Activated T-helper 1 cell treated with anti-CD3 and anti-CD28 coated beads, Interleukin-12 subunit alpha, Interleukin-12 subunit beta, Interleukin-2, Interleukin-4 antibody, amounts not matched to agents 30 ng/mL and 10 ng/mL and 1 ng/mL, durations not matched to agents 14 hours and 24 hours and 36 hours (primary cell): ENCODE measurements at regions of chr9 and their contacts with region 1.

Region 1: GRCh38 chr9:109887079-109887478 is 107.1 kb downstream of the PALM2AKAP2 start:
- DNase-seq: no peak
- H3K4me3 Mint-ChIP-seq: peak overlapping the region; percentile 64
- H3K27ac Mint-ChIP-seq: peak overlapping the region; percentile 92
- H3K4me1 Mint-ChIP-seq: peaks cover 94% of the 10 kb centered on the region
- H3K27me3 Mint-ChIP-seq: no peaks in the 10 kb centered on the region

Region 2: DNA sequence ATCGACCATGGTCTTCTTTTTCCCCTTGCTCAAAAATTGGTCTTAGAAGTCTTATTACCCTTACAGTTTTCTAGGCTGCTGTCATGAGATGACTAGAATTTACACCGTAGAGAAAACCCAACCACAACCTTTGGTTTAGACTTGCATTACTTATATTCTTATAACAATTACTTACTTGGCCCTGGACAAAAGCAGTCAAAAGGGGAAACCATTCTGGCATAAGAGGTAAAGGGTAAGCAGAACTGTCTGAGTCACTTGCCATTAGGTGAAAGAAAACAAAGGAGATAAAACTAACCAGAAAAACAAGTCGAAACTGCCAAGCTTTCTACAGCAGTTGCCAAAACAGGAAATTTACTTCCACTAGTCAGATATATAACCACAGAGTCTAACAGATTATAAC is 785.3 kb before region 1 on chr9:
- intact Hi-C with region 1: loop called (anchors 1 kb)
- DNase-seq: peak; percentile 14
- H3K4me3 Mint-ChIP-seq: peak overlapping the region; percentile 46
- H3K27ac Mint-ChIP-seq: peak overlapping the region; percentile 73
- H3K4me1 Mint-ChIP-seq: peaks cover 65% of the 10 kb centered on the region
- H3K27me3 Mint-ChIP-seq: no peaks in the 10 kb centered on the region

Region 3: GRCh38 chr9:109463924-109464625 is 423.0 kb before region 1 on chr9:
- intact Hi-C with region 1: loop called (anchors 2 kb)
- DNase-seq: peak; percentile 29
- H3K4me3 Mint-ChIP-seq: no peak overlapping the region
- H3K27ac Mint-ChIP-seq: peak overlapping the region; percentile 88
- H3K4me1 Mint-ChIP-seq: peaks cover 71% of the 10 kb centered on the region
- H3K27me3 Mint-ChIP-seq: peaks cover 1% of the 10 kb centered on the region

Region 4: DNA sequence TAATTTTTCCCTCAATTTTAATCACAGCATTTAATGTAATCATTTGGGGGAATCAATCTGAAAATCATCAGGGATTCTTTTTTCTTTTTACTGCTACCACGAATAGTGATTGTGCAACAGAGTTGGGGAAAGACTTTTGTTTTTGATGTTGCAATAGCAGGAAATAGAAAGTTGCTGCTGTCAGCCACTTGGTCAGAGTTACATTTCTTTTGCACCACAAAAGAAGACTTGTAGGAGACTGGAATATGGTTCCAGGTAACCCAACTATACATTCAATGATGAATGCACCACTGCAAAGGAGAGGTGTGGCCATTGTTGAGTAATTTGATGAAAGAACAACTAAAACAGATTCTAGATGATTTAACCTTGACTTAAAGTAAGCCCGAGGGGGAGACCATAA is 153.4 kb before region 1 on chr9:
- intact Hi-C with region 1: loop called (anchors 5 kb)
- DNase-seq: no peak
- H3K4me3 Mint-ChIP-seq: no peak overlapping the region
- H3K27ac Mint-ChIP-seq: no peak overlapping the region
- H3K4me1 Mint-ChIP-seq: peaks cover 17% of the 10 kb centered on the region
- H3K27me3 Mint-ChIP-seq: peaks cover 32% of the 10 kb centered on the region

Region 5: GRCh38 chr9:109831998-109832658 is 55.0 kb before region 1 on chr9:
- intact Hi-C with region 1: no loop called
- DNase-seq: no peak
- H3K4me3 Mint-ChIP-seq: no peak overlapping the region
- H3K27ac Mint-ChIP-seq: no peak overlapping the region
- H3K4me1 Mint-ChIP-seq: no peaks in the 10 kb centered on the region
- H3K27me3 Mint-ChIP-seq: peaks cover 1% of the 10 kb centered on the region

Region 6: GRCh38 chr9:109918339-109919163 is 31.5 kb after region 1 on chr9:
- intact Hi-C with region 1: loop called (anchors 1 kb)
- DNase-seq: peak; percentile 44
- H3K4me3 Mint-ChIP-seq: peak overlapping the region; percentile 75
- H3K27ac Mint-ChIP-seq: peak overlapping the region; percentile 97
- H3K4me1 Mint-ChIP-seq: peaks cover 64% of the 10 kb centered on the region
- H3K27me3 Mint-ChIP-seq: no peaks in the 10 kb centered on the region

Region 7: GRCh38 chr9:111231802-111232580 is 1344.9 kb after region 1 on chr9:
- intact Hi-C with region 1: no loop called
- DNase-seq: no peak
- H3K4me3 Mint-ChIP-seq: no peak overlapping the region
- H3K27ac Mint-ChIP-seq: no peak overlapping the region
- H3K4me1 Mint-ChIP-seq: no peaks in the 10 kb centered on the region
- H3K27me3 Mint-ChIP-seq: no peaks in the 10 kb centered on the region